Ovary (tissue), 10 donors: ENCODE measurements at regions of chr17 and their contacts with region 1.

Region 1: DNA sequence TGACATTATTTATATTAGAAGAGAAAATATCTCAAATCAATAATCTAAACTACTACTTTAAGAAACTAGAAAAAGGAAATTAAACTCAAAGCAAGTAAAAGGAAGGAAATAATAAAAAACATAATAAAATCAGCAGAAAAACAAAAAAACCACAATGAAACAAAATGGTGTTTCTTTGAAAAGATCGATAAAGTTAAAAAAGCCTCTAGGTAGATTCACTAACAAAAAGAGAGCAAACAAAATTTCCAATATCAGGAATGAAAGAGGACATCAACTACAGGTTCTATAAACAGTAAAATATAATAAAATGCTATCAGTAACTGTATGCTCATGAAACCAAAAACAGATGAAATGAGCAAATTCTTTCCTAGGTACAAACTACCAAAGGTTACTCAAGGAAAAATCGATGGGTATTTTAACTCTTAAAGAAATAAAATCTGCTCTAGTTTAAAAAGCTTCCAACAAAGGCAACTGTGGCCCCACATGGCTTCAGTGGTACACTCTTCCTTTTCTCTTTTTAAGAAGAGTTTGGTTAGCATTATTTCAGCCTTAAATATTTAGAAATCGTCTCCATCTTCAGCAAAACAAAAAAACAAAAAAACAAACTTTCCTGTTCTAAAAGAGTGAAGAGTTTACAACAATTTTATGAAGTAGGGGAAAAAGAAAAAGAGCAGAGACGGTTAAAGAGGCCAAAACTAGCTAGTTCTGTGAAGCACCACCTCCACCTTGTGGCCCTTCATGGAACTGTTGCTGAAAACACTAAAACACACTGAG is 102.2 kb downstream of the TRIM37 start:
- DNase-seq: peak; percentile 28 to 69 (median 58)
- H3K4me3 ChIP-seq: no peak overlapping the region
- H3K27ac ChIP-seq: no peak overlapping the region
- H3K4me1 ChIP-seq: peaks cover 2% of the 10 kb centered on the region
- H3K27me3 ChIP-seq: no peaks in the 10 kb centered on the region
- CTCF ChIP-seq: peak; percentile 81 to 92 (median 87)
- EP300 ChIP-seq: no peak
- POLR2A ChIP-seq: no peak

Region 2: DNA sequence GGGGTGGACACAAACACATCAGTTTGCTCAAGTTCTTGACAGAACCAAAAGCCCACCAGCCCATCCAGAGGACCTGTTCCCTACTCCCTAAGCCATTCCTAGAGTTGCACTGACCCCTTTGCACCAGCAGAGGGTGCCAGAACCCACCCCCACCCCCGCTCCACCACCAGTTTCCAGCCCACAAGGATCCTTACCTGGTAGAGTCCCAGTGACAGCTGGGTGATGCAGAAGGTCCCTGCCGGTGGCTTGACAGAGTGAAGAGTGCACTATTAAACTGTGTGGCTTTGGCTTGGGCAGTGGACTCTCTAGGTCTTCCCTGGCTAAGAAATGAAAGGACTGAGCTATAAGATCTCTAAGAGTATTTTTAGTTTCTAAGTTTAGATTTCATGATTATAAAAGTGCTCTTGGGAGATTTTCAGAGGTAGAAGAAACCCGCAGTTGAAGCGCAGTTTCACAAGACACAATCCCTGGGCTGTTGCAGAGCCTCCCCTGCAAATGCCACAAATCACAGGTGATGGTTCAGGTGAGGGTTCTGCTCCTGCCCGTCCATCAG is 416.7 kb before region 1 on chr17:
- intact Hi-C with region 1: loop called in 3 of 4 experiments (anchors 5 to 10 kb)
- DNase-seq: peak; percentile 13 to 59 (median 43)
- H3K4me3 ChIP-seq: no peak overlapping the region
- H3K27ac ChIP-seq: no peak overlapping the region
- H3K4me1 ChIP-seq: no peaks in the 10 kb centered on the region
- H3K27me3 ChIP-seq: no peaks in the 10 kb centered on the region
- CTCF ChIP-seq: peak; percentile 36 to 58 (median 42)
- EP300 ChIP-seq: no peak
- POLR2A ChIP-seq: no peak

Region 3: GRCh38 chr17:58710936-58711775 is 293.4 kb before region 1 on chr17:
- intact Hi-C with region 1: loop called in 1 of 4 experiments (anchors 10 kb)
- DNase-seq: peak in 2 of 5 donors; percentile 21 to 23
- H3K4me3 ChIP-seq: no peak overlapping the region
- H3K27ac ChIP-seq: no peak overlapping the region
- H3K4me1 ChIP-seq: no peaks in the 10 kb centered on the region
- H3K27me3 ChIP-seq: no peaks in the 10 kb centered on the region
- CTCF ChIP-seq: peak in 2 of 3 donors; percentile 12 to 24
- EP300 ChIP-seq: no peak
- POLR2A ChIP-seq: no peak

Region 4: GRCh38 chr17:58755577-58756245 is 248.8 kb before region 1 on chr17 and contains the start of gene PPM1E:
- intact Hi-C with region 1: no loop called
- DNase-seq: peak; percentile 49 to 78 (median 67)
- H3K4me3 ChIP-seq: peak within 1 kb of the TSS; percentile 37
- H3K27ac ChIP-seq: no peak within 1 kb of the TSS
- H3K4me1 ChIP-seq: peaks cover 4% of the 10 kb centered on the region
- H3K27me3 ChIP-seq: no peaks in the 10 kb centered on the region
- CTCF ChIP-seq: no peak
- EP300 ChIP-seq: no peak
- POLR2A ChIP-seq: no peak
- total RNA-seq, gene PPM1E: 0.24 to 3.2 (median 0.47) TPM

Region 5: GRCh38 chr17:59046192-59046591 is 41.7 kb after region 1 on chr17:
- intact Hi-C with region 1: no loop called
- DNase-seq: no peak
- H3K4me3 ChIP-seq: no peak overlapping the region
- H3K27ac ChIP-seq: no peak overlapping the region
- H3K4me1 ChIP-seq: no peaks in the 10 kb centered on the region
- H3K27me3 ChIP-seq: no peaks in the 10 kb centered on the region
- CTCF ChIP-seq: no peak
- EP300 ChIP-seq: no peak
- POLR2A ChIP-seq: no peak